MCF 10A (cell line): ENCODE measurements at regions of chr1 and their contacts with region 1.

Region 1: DNA sequence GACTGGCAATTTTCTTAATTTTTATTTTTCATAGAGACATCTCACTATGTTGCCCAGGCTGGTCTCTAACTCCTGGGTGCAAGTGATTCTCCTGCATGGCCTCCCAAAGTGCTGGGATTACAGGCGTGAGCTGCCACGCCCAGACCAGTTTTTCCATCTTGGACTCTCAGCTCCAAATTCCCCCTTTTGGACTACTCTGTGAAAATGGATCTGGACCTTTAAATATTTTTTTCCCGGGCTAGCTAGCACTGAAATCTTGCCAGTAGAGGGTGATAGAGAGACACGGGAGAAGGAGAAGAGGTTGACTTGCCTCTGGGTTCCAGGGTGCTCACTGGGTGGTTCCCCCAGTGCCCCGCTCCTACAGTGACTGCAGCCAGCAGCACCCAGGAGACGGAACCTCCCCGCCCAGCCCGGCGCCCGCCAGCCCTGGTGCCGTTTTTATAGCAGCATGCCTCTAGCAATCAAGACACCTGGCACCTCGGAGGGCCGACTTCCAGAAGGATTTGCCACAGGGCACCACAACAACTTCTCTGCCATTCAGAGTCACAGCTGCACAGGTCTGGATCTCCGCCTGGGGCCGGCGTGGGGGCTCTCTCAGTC is 34.7 kb upstream of the SCCPDH start:
- DNase-seq: peak; percentile 93
- H3K4me3 Mint-ChIP-seq: peak overlapping the region; percentile 53
- H3K27ac Mint-ChIP-seq: no peak overlapping the region
- H3K4me1 Mint-ChIP-seq: no peaks in the 10 kb centered on the region
- H3K27me3 Mint-ChIP-seq: no peaks in the 10 kb centered on the region
- CTCF ChIP-seq: peak; percentile 97

Region 2: DNA sequence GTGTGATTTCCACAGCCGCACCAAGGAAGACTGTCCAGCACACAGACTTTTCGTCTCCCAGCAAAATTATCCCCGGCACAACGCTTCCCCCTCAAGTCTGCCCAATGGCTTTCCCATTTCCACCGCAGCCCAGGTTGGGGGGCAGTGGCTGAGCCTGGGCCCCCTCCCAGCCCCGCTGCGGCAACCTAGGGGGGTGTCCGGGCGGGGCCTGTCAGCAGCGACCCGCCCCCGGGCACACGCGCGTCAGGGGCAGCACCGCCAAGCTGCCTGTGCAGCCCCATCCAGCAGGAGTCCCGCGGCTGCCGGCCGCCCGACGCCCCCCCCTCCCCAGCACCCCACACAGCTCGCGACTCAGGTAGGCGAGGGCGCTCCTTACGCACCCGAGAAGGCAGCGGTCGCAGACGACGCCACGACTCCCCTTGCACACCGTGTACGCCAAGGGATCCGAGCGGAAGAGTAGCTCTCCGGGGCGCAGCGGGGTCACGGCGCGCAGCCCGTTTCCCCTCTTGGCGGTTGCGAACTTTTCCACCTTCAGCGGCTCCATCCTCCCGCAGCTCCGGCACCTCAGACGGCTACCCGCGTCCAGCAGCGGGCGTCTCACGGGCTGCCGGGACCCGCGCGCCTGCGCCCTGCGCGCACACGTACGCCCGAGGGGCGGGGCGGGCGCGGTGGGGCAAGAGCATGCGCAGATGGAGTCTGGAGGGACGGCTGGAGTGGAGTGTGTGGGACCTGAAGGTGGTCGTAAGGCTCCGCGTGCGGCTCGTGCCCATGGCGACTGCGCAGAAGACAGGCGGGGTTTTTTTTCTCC is 182.6 kb before region 1 on chr1 and contains the start of gene SMYD3:
- CTCF ChIA-PET with region 1: interaction called, 12 read pairs
- POLR2A ChIA-PET with region 1: no interaction called
- intact Hi-C with region 1: no loop called
- DNase-seq: peak; percentile 89
- H3K4me3 Mint-ChIP-seq: peak within 1 kb of the TSS; percentile 76
- H3K27ac Mint-ChIP-seq: peak within 1 kb of the TSS; percentile 18
- H3K4me1 Mint-ChIP-seq: peaks cover 35% of the 10 kb centered on the region
- H3K27me3 Mint-ChIP-seq: no peaks in the 10 kb centered on the region
- CTCF ChIP-seq: no peak
- total RNA-seq, gene SMYD3: 21.4 and 26.9 TPM in 2 replicates

Region 3: DNA sequence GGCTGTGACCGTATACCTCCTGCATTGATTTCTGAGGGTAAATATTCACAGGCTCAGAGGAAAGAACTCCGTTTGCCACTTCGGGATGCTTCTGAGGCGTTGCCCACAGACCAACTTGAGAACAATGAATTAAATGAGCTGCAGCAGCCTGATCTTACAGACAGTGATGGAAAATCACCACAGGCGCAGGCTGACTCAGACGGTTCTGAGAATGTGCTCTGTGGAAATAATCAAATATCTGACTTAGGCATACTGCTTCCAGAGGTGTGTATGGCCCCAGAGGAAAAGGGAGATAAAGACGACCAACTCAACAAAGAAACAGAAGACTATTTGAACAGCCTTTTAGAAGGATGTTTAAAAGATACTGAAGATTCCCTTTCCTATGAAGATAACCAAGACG is 42.0 kb before region 1 on chr1:
- CTCF ChIA-PET with region 1: interaction called, 29 read pairs
- POLR2A ChIA-PET with region 1: no interaction called
- intact Hi-C with region 1: no loop called
- DNase-seq: no peak
- H3K4me3 Mint-ChIP-seq: no peak overlapping the region
- H3K27ac Mint-ChIP-seq: no peak overlapping the region
- H3K4me1 Mint-ChIP-seq: no peaks in the 10 kb centered on the region
- H3K27me3 Mint-ChIP-seq: no peaks in the 10 kb centered on the region
- CTCF ChIP-seq: no peak

Region 4: DNA sequence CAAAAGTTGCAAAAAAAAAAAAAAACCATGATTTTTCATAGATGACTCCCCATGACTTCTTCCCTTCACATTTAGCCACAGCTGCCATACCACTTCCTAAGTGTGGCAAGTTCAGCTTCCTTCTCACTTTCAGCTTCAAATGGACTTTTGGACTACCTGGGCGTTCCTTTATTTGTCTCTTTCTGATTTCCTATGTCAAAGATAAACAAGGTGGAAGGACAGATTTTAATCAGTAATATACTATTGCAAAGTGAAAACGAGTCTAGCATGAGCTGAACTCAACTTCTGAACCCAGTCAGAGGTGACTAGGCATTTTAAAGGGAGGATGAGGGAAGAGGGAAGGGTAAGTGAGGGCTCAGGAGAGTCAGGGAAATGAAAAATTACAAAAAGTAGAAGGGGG is 20.3 kb after region 1 on chr1:
- CTCF ChIA-PET with region 1: interaction called, 74 read pairs
- POLR2A ChIA-PET with region 1: interaction called, 4 read pairs
- intact Hi-C with region 1: no loop called
- DNase-seq: no peak
- H3K4me3 Mint-ChIP-seq: no peak overlapping the region
- H3K27ac Mint-ChIP-seq: no peak overlapping the region
- H3K4me1 Mint-ChIP-seq: peaks cover 20% of the 10 kb centered on the region
- H3K27me3 Mint-ChIP-seq: no peaks in the 10 kb centered on the region
- CTCF ChIP-seq: no peak

Region 5: GRCh38 chr1:246742396-246742795 is 52.9 kb after region 1 on chr1:
- CTCF ChIA-PET with region 1: interaction called, 464 read pairs
- POLR2A ChIA-PET with region 1: interaction called, 4 read pairs
- intact Hi-C with region 1: no loop called
- DNase-seq: no peak
- H3K4me3 Mint-ChIP-seq: no peak overlapping the region
- H3K27ac Mint-ChIP-seq: no peak overlapping the region
- H3K4me1 Mint-ChIP-seq: no peaks in the 10 kb centered on the region
- H3K27me3 Mint-ChIP-seq: no peaks in the 10 kb centered on the region
- CTCF ChIP-seq: no peak

Region 6: DNA sequence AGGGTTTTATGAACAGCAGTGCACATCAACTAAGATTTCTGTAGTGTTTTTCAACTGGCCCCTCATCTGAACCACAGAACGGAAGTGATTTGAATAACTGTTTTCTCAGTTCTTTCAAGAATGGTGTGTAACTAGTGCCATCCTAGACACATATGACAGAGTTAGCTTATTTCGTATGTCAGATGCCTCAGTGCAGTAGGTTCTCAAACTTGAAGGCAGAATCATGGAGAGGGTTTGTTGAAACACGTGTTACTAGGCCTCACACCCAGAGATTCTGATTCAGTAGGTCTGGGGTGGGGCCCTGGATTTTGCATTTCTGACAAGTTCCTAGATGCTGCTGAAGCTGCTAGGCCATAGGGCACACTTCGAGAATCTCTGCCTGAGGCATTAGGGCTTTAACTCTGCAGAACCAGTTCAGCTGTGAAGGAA is 83.7 kb after region 1 on chr1:
- CTCF ChIA-PET with region 1: interaction called, 31 read pairs
- POLR2A ChIA-PET with region 1: interaction called, 4 read pairs
- intact Hi-C with region 1: no loop called
- DNase-seq: no peak
- H3K4me3 Mint-ChIP-seq: no peak overlapping the region
- H3K27ac Mint-ChIP-seq: peak overlapping the region; percentile 36
- H3K4me1 Mint-ChIP-seq: peaks cover 18% of the 10 kb centered on the region
- H3K27me3 Mint-ChIP-seq: no peaks in the 10 kb centered on the region
- CTCF ChIP-seq: no peak